PC-9 (cell line): ENCODE measurements at regions of chr1 and their contacts with region 1.

Region 1: GRCh38 chr1:2314803-2315673 is 76.3 kb downstream of the MORN1 start:
- DNase-seq: peak in 1 of 2 experiments; percentile 53
- H3K4me3 ChIP-seq: peak overlapping the region; percentile 54
- H3K27ac ChIP-seq: no peak overlapping the region
- H3K4me1 ChIP-seq: peaks cover 24% of the 10 kb centered on the region
- H3K27me3 ChIP-seq: no peaks in the 10 kb centered on the region
- CTCF ChIP-seq: peak; percentile 85

Region 2: DNA sequence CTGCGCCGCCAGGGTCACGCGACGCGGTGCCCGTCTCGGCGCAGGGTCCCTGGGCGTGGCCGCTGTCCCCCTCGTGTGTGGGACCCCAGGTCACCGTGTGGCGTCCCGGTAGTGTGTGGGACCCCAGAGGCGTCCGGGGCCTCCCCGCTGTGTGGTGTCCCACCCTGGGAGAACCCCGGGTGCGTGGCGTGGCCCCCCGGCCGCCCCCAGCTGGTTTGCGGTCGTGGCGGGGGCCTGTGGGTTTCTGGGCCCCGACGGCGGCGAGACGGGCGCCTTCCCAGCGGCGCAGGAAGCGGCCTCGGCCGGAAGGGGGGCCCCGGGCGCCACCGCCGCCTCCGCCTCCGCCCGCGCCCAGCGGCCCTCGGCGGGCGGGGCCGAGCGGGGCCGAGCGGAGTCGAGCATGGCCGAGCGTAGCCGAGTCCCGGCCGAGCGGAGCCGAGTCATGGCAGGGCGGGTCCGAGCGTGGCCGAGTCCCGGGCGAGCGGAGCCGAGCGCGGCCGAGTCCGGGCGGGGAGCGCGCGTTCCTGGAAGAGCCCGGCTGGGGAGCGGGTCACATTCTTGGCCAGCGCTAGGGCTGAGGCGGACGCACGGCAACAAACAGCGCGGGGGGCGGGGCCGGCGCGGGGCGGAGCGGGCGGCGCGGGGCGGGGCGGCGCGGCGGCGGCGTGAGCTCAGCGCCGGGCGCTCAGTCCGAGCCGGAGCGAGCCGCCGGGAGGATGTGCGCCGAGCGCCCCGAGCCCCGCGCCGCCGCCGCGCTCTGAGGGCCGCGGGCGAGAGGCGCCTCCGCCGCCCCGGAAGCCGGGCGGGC is 87.5 kb before region 1 on chr1:
- CTCF ChIA-PET with region 1: no interaction called
- POLR2A ChIA-PET with region 1: interaction called, 3 read pairs
- intact Hi-C with region 1: loop called (anchors 5 kb)
- DNase-seq: peak; percentile 83 to 97
- H3K4me3 ChIP-seq: peak overlapping the region; percentile 78
- H3K27ac ChIP-seq: peak overlapping the region; percentile 72
- H3K4me1 ChIP-seq: peaks cover 13% of the 10 kb centered on the region
- H3K27me3 ChIP-seq: no peaks in the 10 kb centered on the region
- CTCF ChIP-seq: no peak; the same call in 1 of the 2 replicates

Region 3: DNA sequence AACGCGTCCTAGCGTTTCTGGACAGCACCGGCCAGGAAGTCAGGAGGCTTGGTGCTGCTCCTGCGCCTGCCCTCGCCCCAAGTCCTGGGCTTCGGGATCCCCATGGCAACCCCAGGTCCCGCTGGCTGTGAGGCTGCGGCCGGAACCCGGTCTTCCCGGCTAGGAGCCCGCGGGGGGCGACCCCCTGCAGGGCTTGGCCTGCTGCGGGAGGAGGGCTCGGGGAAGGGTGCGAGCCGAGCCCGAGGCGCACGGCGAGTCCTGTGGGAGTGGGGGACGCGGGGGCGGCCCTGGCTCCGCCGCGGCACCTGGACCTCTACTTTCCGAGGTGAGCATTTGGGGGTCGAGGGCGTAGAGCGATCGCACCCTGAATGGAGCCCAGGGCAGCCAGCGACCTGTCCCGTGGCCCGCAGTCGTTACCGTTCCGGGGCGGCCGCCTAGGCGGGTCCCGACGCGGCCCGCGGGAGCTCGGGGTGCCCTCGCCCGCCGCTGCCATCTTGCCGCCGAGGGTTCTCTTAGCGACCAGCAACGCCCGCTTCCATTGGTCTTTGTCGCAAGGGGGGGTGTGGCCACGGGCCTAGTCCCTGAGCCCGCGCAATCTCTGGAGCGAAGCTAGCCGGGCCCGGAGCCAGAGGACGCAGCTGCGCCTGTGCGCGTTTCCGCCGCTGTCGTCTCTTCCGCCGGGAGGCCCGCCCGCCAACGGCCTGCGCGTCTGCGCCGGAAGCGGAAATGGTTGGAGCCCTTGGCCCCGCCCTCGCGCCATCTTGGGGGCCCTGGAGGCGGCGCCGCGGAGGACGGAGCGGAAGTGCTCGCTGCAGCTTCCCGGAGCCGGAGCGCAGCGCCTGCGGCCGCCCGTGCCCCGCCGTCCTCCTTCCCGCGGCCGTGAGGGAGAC is 76.2 kb after region 1 on chr1 and contains the starts of genes MORN1 and RER1:
- CTCF ChIA-PET with region 1: no interaction called
- POLR2A ChIA-PET with region 1: no interaction called
- intact Hi-C with region 1: loop called (anchors 5 kb)
- DNase-seq: peak; percentile 95 to 98
- H3K4me3 ChIP-seq: peak within 1 kb of the TSS; percentile 80
- H3K27ac ChIP-seq: no peak within 1 kb of the TSS
- H3K4me1 ChIP-seq: peaks cover 19% of the 10 kb centered on the region
- H3K27me3 ChIP-seq: no peaks in the 10 kb centered on the region
- CTCF ChIP-seq: no peak
- total RNA-seq, gene MORN1: 47.8 and 51.0 TPM in 2 replicates
- total RNA-seq, gene RER1: 109 and 131 TPM in 2 replicates

Region 4: DNA sequence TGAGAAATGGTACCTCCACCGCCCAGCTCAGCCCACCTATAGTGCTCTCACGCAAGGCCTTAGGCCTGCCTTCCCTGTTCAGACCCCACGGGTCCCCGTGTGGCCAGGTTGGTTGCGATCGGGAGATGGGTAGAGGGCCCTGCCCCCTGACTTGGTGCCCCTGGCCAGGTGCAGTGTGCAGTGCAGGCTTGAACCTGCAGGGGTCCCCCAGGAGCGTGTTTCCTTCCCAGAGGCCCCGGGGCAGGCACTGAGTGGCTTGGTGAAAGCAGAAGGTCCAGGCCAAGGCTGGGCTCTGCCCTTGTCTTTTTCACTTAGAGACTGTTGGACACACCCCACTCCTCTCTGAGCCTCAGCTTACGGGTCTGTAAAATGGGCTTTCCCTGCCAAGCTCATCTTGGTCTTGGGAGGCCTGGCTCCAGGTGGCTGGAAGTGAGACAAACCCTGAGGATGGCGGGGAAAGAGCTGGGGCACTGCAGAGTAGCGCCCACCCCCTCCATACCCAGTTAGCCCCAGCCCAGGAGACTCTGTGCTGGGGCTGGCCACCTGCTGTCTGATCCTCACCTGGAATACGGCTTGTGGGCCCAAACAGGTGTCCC is 224.4 kb after region 1 on chr1:
- CTCF ChIA-PET with region 1: no interaction called
- POLR2A ChIA-PET with region 1: no interaction called
- intact Hi-C with region 1: loop called (anchors 10 kb)
- DNase-seq: no peak
- H3K4me3 ChIP-seq: no peak overlapping the region
- H3K27ac ChIP-seq: no peak overlapping the region
- H3K4me1 ChIP-seq: peaks cover 20% of the 10 kb centered on the region
- H3K27me3 ChIP-seq: no peaks in the 10 kb centered on the region
- CTCF ChIP-seq: peak; percentile 60